ENCODE measurements at regions of chr2 and their contacts with region 1.

Region 1: GRCh38 chr2:237674731-237675276 is 47.4 kb downstream of the LRRFIP1 start:
- DNase-seq: peak; percentile 83 to 92
- ATAC-seq: peak; percentile 83 to 89 (median 86)
- H3K4me3 ChIP-seq: peak overlapping the region in 6 of 10 donors; percentile 23 to 40 (median 28)
- H3K27ac ChIP-seq: peak overlapping the region; percentile 48 to 92 (median 84)
- H3K4me1 ChIP-seq: peaks cover 34 to 92% (median 87%) of the 10 kb centered on the region in 9 donors
- H3K27me3 ChIP-seq: no peaks in the 10 kb centered on the region
- CTCF ChIP-seq: peak in 4 of 9 donors; percentile 6 to 23 (median 16)

Region 2: GRCh38 chr2:237590272-237591140 is 84.3 kb before region 1 on chr2 and contains the start of gene RAB17:
- intact Hi-C with region 1: loop called in 1 of 10 experiments (anchors 5 kb)
- DNase-seq: no peak
- ATAC-seq: peak in 6 of 8 donors; percentile 38 to 74 (median 58)
- H3K4me3 ChIP-seq: peak within 1 kb of the TSS in 1 of 10 donors; percentile 4
- H3K27ac ChIP-seq: peak within 1 kb of the TSS in 4 of 10 donors; percentile 9 to 43 (median 40)
- H3K4me1 ChIP-seq: peaks cover 10 to 47% (median 26%) of the 10 kb centered on the region in 9 donors
- H3K27me3 ChIP-seq: no peaks in the 10 kb centered on the region
- CTCF ChIP-seq: no peak
- total RNA-seq, gene RAB17: 1.9 to 6.9 (median 4.6) TPM

Region 3: DNA sequence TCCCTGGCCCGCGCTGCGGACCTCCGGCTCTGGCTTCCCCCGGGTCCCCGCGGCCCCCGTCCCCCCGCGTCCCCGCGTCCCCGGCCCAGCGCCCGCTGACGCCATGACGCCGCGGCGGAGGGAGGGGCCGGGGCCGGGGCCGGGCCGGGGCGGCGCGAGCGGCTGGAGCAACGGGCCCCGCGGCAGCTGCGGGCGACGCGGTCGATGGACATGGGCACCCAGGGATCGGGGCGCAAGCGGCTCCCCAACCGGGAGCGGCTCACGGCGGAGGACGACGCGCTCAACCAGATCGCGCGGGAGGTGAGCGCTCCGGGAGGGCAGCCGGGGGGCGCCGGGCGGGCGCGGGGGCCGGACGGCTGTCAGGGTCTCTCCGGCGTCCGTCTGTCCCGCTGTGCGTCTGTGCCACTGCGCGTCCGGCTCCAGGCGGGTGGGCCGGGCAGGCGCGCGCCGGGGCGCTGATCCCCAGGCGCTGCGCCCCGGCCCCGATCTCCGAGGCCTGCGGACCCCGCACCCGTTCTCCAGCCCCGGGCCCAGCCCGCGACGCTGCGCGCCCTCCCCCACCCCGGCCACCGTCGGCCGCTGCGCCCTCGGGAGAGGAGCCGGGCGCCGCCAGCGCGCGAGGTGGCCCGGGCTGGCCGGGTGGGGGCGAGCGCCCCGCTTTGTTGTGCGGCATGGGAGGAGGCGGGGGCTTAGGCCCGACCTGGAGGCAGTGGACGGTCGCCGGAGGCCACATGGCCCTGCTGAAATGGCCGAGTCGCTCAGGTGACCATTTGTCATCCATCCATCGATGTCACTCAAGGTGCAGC is 47.2 kb before region 1 on chr2 and contains the start of gene LRRFIP1:
- intact Hi-C with region 1: loop called in 2 of 10 experiments (anchors 5 kb)
- DNase-seq: peak in 1 of 2 donors; percentile 59
- ATAC-seq: peak; percentile 52 to 84 (median 62)
- H3K4me3 ChIP-seq: peak within 1 kb of the TSS; percentile 41 to 90 (median 66)
- H3K27ac ChIP-seq: peak within 1 kb of the TSS; percentile 81 to 95 (median 93)
- H3K4me1 ChIP-seq: peaks cover 9 to 71% (median 57%) of the 10 kb centered on the region in 9 donors
- H3K27me3 ChIP-seq: peaks cover 0 to 14% (median 3%) of the 10 kb centered on the region in 7 donors
- CTCF ChIP-seq: peak in 3 of 9 donors; percentile 22 to 31 (median 27)
- total RNA-seq, gene LRRFIP1: 91.5 to 132 (median 112) TPM

Region 4: DNA sequence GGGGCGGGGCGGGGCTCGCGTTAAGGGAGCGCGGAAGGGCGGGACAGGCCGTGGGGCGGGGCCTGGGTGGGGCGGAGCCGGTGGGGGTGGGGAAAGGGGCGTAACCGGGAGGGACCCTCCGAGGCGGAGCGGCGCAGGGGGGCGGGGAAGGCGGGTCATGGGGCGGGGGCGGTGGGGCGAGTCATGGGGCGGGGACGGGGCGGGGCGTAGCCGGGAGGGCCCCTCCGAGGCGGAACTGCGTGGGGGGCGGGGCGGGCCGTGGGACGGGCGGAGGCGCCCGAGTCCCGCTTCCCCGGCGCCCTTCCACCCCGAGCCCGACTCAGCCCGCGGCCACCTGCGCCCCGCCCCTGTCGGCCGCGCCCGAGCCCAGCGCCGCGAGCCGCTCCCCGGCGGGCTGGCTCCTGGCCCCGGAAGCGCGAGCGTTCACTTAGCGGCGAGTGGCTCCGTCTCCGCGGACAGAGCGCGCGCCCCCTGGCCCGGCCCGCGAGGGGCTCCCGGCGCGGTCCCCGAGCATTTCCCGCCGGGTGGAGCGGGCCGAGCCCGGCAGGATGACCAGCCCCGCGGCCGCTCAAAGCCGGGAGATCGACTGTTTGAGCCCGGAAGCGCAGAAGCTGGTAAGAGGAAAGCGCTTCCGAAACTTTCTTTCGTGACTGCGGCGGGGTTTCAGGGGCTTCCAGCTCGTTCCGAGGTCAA is 17.2 kb after region 1 on chr2:
- intact Hi-C with region 1: loop called in 1 of 10 experiments (anchors 2 kb)
- DNase-seq: peak; percentile 96 to 98
- ATAC-seq: peak; percentile 70 to 83 (median 80)
- H3K4me3 ChIP-seq: peak overlapping the region; percentile 71 to 97 (median 87)
- H3K27ac ChIP-seq: peak overlapping the region; percentile 82 to 98 (median 95)
- H3K4me1 ChIP-seq: peaks cover 15 to 93% (median 87%) of the 10 kb centered on the region in 9 donors
- H3K27me3 ChIP-seq: no peaks in the 10 kb centered on the region
- CTCF ChIP-seq: peak in 1 of 9 donors; percentile 12

Measured in heart right ventricle (tissue), 16 donors.